Activated T-helper 1 cell treated with anti-CD3 and anti-CD28 coated beads, Interleukin-12 subunit alpha, Interleukin-12 subunit beta, Interleukin-2, Interleukin-4 antibody, amounts not matched to agents 30 ng/mL and 10 ng/mL and 1 ng/mL, durations not matched to agents 14 hours and 24 hours and 36 hours (primary cell): ENCODE measurements at regions of chr12 and their contacts with region 1.

Region 1: DNA sequence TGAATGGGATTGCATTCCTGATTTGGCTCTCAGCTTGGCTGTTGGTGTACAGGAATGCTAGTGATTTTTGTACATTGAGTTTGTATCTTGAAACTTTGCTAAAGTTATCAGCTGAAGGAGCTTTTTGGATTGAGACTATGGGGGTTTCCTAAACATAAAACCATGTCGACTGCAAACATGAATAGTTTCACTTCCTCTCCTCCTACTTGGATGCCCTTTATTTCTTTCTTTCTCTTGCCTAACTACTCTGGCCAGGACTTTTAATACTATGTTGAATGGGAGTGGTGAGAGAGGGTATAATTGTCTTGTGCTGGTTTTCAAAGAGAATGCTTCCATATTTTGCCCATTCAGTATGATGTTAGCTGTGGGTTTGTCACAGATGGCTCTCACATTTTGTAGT is 141.5 kb downstream of the CEP83 start:
- DNase-seq: no peak
- H3K4me3 Mint-ChIP-seq: no peak overlapping the region
- H3K27ac Mint-ChIP-seq: no peak overlapping the region
- H3K4me1 Mint-ChIP-seq: peaks cover 7% of the 10 kb centered on the region
- H3K27me3 Mint-ChIP-seq: no peaks in the 10 kb centered on the region

Region 2: DNA sequence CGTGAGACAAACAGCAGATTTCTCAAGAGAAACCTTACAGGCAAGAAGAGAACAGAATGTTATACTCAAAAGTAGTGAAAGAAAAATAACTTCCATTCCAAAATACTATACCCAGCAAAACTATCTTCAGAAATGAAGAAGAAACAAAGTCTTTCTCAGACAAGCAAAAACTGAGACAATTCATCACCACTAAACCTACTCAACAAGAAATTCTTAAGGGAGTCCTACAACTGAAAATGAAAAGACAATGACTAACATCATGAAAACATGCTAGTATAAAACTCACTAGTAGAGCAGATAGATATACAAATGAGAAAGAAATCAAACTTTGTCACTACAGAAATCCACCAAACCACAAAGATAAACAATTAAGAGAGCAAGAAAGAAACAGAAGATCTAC is 34.9 kb after region 1 on chr12:
- intact Hi-C with region 1: loop called (anchors 5 kb)
- DNase-seq: no peak
- H3K4me3 Mint-ChIP-seq: no peak overlapping the region
- H3K27ac Mint-ChIP-seq: peak overlapping the region; percentile 41
- H3K4me1 Mint-ChIP-seq: no peaks in the 10 kb centered on the region
- H3K27me3 Mint-ChIP-seq: no peaks in the 10 kb centered on the region